ENCODE measurements at regions of chr12 and their contacts with region 1.

Region 1: GRCh38 chr12:81369175-81369574 is 291.3 kb downstream of the ACSS3 start:
- DNase-seq: no peak
- H3K4me3 ChIP-seq: peak overlapping the region in 55 of 59 donors; percentile 3 to 67 (median 39)
- H3K27ac ChIP-seq: peak overlapping the region in 58 of 59 donors; percentile 4 to 88 (median 66)
- H3K27me3 ChIP-seq: no peaks in the 10 kb centered on the region
- CTCF ChIP-seq: peak in 2 of 56 donors; percentile 8 to 12

Region 2: DNA sequence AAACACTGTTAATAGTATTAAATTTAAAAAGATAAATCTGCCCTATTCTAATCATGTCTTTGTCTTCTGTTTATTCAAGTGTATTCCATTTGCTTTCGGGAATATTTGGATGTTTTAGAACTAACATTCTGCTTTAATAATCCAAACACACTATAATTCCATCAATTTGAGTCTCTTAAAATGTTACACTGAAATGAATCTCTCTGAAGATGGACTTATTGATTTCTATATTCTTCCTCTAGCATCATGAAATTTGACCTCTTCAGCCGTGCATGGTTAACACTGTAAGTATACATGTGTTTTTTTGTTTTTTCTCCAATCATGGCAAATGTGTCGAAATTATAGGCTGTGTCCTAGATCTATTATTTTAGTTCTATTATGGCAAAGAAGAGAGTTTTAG is 47.9 kb after region 1 on chr12:
- intact Hi-C with region 1: loop called in 1 of 2 experiments (anchors 10 kb)
- DNase-seq: no peak
- H3K4me3 ChIP-seq: peak overlapping the region in 57 of 59 donors; percentile 12 to 66 (median 42)
- H3K27ac ChIP-seq: peak overlapping the region; percentile 24 to 95 (median 89)
- H3K27me3 ChIP-seq: no peaks in the 10 kb centered on the region
- CTCF ChIP-seq: peak in 1 of 56 donors; percentile 10

Region 3: GRCh38 chr12:81558031-81558430 is 188.9 kb after region 1 on chr12:
- intact Hi-C with region 1: no loop called
- DNase-seq: no peak
- H3K4me3 ChIP-seq: no peak overlapping the region
- H3K27ac ChIP-seq: no peak overlapping the region
- H3K27me3 ChIP-seq: no peaks in the 10 kb centered on the region
- CTCF ChIP-seq: no peak

Measured in dorsolateral prefrontal cortex (tissue), 120 donors.